ENCODE measurements at regions of chr11 and their contacts with region 1.

Region 1: GRCh38 chr11:18115360-18116127 is 9.7 kb upstream of the SAAL1 start:
- DNase-seq: peak; percentile 60 to 84
- H3K4me3 ChIP-seq: no peak overlapping the region
- H3K27ac ChIP-seq: no peak overlapping the region
- H3K4me1 ChIP-seq: no peaks in the 10 kb centered on the region
- H3K27me3 ChIP-seq: peaks cover 0 to 4% (median 2%) of the 10 kb centered on the region in 4 experiments; a peak in 4 of 7 replicates
- CTCF ChIP-seq: peak; percentile 78 to 90 (median 88)
- EP300 ChIP-seq: no peak
- POLR2A ChIP-seq: no peak
- RAD21 ChIP-seq: peak; percentile 95 to 96

Region 2: GRCh38 chr11:17906436-17906835 is 209.1 kb before region 1 on chr11:
- CTCF ChIA-PET with region 1: no interaction called
- POLR2A ChIA-PET with region 1: no interaction called
- DNase-seq: peak; percentile 70 to 73
- H3K4me3 ChIP-seq: peak overlapping the region in 1 of 4 experiments; percentile 20; a peak in 1 of 8 replicates
- H3K27ac ChIP-seq: no peak overlapping the region
- H3K4me1 ChIP-seq: peaks cover 4 to 10% (median 6%) of the 10 kb centered on the region in 4 experiments; a peak in 6 of 7 replicates
- H3K27me3 ChIP-seq: no peaks in the 10 kb centered on the region
- CTCF ChIP-seq: peak; percentile 62 to 86 (median 67)
- EP300 ChIP-seq: no peak
- POLR2A ChIP-seq: no peak
- RAD21 ChIP-seq: peak; percentile 74 to 79

Region 3: DNA sequence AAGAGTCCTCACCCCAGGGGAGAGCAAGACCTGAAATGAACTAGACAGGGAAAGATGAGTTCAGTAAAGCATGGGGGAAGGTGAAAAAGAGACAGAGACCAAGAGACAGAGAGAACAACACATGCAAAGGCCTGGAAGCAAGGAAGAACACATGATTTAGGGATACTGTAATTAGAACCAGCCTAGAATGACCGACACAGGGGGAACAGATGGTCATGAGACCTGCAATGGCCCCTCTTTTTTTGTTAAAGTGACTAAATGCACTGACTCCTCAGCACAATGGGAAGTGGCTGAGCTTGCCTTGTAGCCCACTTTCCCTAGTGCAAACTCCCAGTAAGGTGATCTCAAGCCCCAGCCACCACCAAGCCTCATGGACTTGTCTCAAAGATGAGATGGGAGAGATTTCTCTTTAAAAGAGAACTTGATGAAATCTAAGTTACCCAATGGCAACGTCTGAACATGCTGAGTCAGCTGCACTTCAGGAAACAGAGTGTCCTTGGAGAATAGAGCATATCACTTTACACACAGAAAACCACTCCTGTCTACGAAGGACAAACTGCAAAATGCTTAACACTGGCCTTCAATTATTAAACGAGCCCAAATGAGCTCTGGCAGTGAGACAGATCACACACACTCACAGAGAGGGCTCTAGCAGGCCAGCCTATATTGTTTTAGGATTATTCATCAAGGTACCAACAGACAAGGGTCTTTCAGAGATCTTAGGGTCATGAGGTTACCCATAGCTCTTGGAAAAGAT is 193.7 kb before region 1 on chr11:
- CTCF ChIA-PET with region 1: no interaction called
- POLR2A ChIA-PET with region 1: no interaction called
- DNase-seq: no peak
- H3K4me3 ChIP-seq: no peak overlapping the region
- H3K27ac ChIP-seq: no peak overlapping the region
- H3K4me1 ChIP-seq: peaks cover 5 to 15% (median 11%) of the 10 kb centered on the region in 4 experiments; a peak in 5 of 7 replicates
- H3K27me3 ChIP-seq: no peaks in the 10 kb centered on the region
- CTCF ChIP-seq: no peak
- EP300 ChIP-seq: no peak
- POLR2A ChIP-seq: no peak
- RAD21 ChIP-seq: no peak

Region 4: DNA sequence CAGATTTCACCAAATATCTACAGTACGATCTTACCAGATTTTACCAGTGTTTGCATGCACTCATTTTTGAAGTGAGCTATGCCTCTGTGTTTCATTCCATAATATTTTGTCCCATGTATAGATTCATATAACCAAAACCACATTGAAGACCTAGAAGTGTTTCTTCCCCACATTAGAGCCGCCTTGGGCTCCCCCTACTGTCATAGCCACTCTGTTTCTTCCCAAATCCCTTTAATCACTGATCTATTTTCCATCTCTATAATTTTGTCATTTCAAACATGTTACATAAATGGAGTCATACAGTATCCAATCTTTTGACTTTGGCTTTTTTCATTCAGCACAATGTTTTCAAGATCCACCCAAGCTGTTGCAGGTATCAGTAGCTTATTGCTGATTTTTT is 29.5 kb after region 1 on chr11:
- CTCF ChIA-PET with region 1: interaction called, 26 read pairs
- POLR2A ChIA-PET with region 1: no interaction called
- DNase-seq: no peak
- H3K4me3 ChIP-seq: no peak overlapping the region
- H3K27ac ChIP-seq: no peak overlapping the region
- H3K4me1 ChIP-seq: no peaks in the 10 kb centered on the region
- H3K27me3 ChIP-seq: no peaks in the 10 kb centered on the region
- CTCF ChIP-seq: peak in 2 of 3 experiments; percentile 25 to 40; a peak in 2 of 4 replicates
- EP300 ChIP-seq: no peak
- POLR2A ChIP-seq: no peak
- RAD21 ChIP-seq: peak; percentile 31 to 33; a peak in 2 of 4 replicates

Region 5: GRCh38 chr11:18193010-18193409 is 77.5 kb after region 1 on chr11:
- CTCF ChIA-PET with region 1: interaction called, 14 read pairs
- POLR2A ChIA-PET with region 1: no interaction called
- DNase-seq: no peak
- H3K4me3 ChIP-seq: no peak overlapping the region
- H3K27ac ChIP-seq: no peak overlapping the region
- H3K4me1 ChIP-seq: no peaks in the 10 kb centered on the region
- H3K27me3 ChIP-seq: no peaks in the 10 kb centered on the region
- CTCF ChIP-seq: peak; percentile 12 to 46 (median 22); a peak in 2 of 4 replicates
- EP300 ChIP-seq: no peak
- POLR2A ChIP-seq: no peak
- RAD21 ChIP-seq: peak in 1 of 2 experiments; percentile 20; a peak in 2 of 4 replicates

Region 6: GRCh38 chr11:18209058-18209457 is 93.5 kb after region 1 on chr11:
- CTCF ChIA-PET with region 1: interaction called, 55 read pairs
- POLR2A ChIA-PET with region 1: interaction called, 8 read pairs
- DNase-seq: no peak
- H3K4me3 ChIP-seq: no peak overlapping the region
- H3K27ac ChIP-seq: no peak overlapping the region
- H3K4me1 ChIP-seq: no peaks in the 10 kb centered on the region
- H3K27me3 ChIP-seq: no peaks in the 10 kb centered on the region
- CTCF ChIP-seq: no peak
- EP300 ChIP-seq: no peak
- POLR2A ChIP-seq: no peak
- RAD21 ChIP-seq: no peak

Region 7: GRCh38 chr11:18229501-18229900 is 114.0 kb after region 1 on chr11:
- CTCF ChIA-PET with region 1: interaction called, 18 read pairs
- POLR2A ChIA-PET with region 1: no interaction called
- DNase-seq: no peak
- H3K4me3 ChIP-seq: no peak overlapping the region
- H3K27ac ChIP-seq: no peak overlapping the region
- H3K4me1 ChIP-seq: no peaks in the 10 kb centered on the region
- H3K27me3 ChIP-seq: no peaks in the 10 kb centered on the region
- CTCF ChIP-seq: no peak
- EP300 ChIP-seq: no peak
- POLR2A ChIP-seq: no peak
- RAD21 ChIP-seq: no peak

Region 8: GRCh38 chr11:18288911-18289310 is 173.4 kb after region 1 on chr11:
- CTCF ChIA-PET with region 1: interaction called, 10 read pairs
- POLR2A ChIA-PET with region 1: no interaction called
- DNase-seq: no peak
- H3K4me3 ChIP-seq: no peak overlapping the region
- H3K27ac ChIP-seq: no peak overlapping the region
- H3K4me1 ChIP-seq: no peaks in the 10 kb centered on the region
- H3K27me3 ChIP-seq: no peaks in the 10 kb centered on the region
- CTCF ChIP-seq: no peak
- EP300 ChIP-seq: no peak
- POLR2A ChIP-seq: no peak
- RAD21 ChIP-seq: no peak

Region 9: GRCh38 chr11:18379201-18379600 is 263.7 kb after region 1 on chr11:
- CTCF ChIA-PET with region 1: no interaction called
- POLR2A ChIA-PET with region 1: no interaction called
- DNase-seq: no peak
- H3K4me3 ChIP-seq: no peak overlapping the region
- H3K27ac ChIP-seq: no peak overlapping the region
- H3K4me1 ChIP-seq: peaks cover 0 to 5% (median 2%) of the 10 kb centered on the region in 4 experiments; a peak in 1 of 7 replicates
- H3K27me3 ChIP-seq: no peaks in the 10 kb centered on the region
- CTCF ChIP-seq: no peak
- EP300 ChIP-seq: no peak
- POLR2A ChIP-seq: no peak
- RAD21 ChIP-seq: no peak

Measured in H1 (cell line).